Activated CD8-positive, alpha-beta T cell treated with anti-CD3 and anti-CD28 coated beads for 36 hours (primary cell): ENCODE measurements at regions of chr19 and their contacts with region 1.

Region 1: DNA sequence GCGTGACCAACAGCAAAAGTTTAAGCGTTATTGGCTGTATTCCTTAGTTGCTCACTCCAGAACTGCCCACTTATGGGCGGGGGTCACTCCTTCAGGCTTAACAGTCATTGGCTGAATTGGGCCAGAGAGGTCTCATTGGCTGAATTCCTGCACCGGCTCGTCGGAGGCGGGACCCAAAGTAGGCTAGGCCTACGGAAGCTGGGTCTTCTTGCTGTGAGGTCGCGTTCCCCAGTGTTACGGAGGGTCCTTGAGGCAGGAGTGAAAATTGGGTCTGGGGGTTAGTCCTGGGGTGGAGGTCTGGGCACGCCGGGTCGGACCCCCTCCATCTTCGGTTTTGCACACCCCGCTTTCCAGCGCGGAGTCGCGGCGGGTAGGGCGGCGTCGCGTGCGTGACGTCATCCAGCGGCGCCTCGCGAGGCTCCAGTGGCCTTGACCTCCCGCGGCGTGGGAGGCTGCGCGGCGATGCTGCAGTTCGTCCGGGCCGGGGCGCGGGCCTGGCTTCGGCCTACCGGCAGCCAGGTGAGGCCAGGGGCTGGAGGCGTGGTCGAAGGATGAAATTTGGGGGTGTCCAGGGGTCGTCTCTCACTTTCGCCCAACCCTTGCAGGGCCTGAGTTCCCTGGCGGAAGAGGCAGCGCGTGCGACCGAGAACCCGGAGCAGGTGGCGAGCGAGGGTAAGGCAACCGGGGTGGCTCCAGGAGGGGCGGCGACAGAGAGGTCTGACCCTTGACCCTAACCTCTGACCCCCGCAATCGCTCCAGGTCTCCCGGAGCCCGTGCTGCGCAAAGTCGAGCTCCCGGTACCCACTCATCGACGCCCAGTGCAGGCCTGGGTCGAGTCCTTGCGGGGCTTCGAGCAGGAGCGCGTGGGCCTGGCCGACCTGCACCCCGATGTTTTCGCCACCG is at the start of gene MRPL4:
- DNase-seq: peak; percentile 99
- ATAC-seq: peak; percentile 98
- H3K4me3 Mint-ChIP-seq: peak within 1 kb of the TSS; percentile 93
- H3K27ac Mint-ChIP-seq: peak within 1 kb of the TSS; percentile 95
- H3K4me1 Mint-ChIP-seq: peaks cover 23% of the 10 kb centered on the region
- H3K27me3 Mint-ChIP-seq: no peaks in the 10 kb centered on the region
- CTCF ChIP-seq: no peak
- total RNA-seq, gene MRPL4: 151 to 153 TPM

Region 2: DNA sequence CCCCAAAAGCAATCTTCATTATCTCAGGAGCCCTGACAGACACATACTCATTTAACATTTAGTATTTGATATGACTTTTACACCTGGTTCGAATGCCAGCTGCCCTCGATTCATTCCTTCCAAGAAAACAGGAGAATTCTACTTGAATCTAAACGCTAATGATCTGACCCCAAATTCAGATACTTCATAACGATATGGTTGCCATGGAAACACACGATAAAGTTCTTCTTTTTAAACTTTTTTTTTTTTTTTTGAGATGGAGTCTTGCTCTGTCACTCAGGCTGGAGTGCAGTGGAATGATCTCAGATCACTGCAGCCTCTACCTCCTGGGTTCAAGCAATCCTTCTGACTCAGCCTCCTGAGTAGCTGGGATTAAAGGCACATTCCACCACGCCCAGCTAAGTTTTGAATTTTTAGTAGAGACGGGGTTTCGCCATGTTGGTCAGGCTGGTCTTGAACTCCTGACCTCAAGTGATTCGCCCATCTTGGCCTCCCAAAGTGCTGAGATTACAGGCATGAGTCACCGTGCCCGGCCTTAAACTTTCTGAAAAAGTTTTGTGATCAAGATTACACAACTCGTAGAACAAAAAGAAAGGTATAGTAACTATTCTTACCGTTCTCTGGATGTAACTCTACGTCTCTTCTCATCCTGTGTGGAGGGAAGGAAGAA is 78.7 kb before region 1 on chr19:
- CTCF ChIA-PET with region 1: interaction called, 11 read pairs
- POLR2A ChIA-PET with region 1: interaction called, 6 read pairs
- intact Hi-C with region 1: no loop called
- DNase-seq: no peak
- ATAC-seq: no peak
- H3K4me3 Mint-ChIP-seq: no peak overlapping the region
- H3K27ac Mint-ChIP-seq: no peak overlapping the region
- H3K4me1 Mint-ChIP-seq: peaks cover 4% of the 10 kb centered on the region
- H3K27me3 Mint-ChIP-seq: no peaks in the 10 kb centered on the region
- CTCF ChIP-seq: no peak

Region 3: GRCh38 chr19:10201176-10201575 is 50.9 kb before region 1 on chr19:
- CTCF ChIA-PET with region 1: interaction called, 24 read pairs
- POLR2A ChIA-PET with region 1: no interaction called
- intact Hi-C with region 1: loop called (anchors 5 kb)
- DNase-seq: no peak
- ATAC-seq: no peak
- H3K4me3 Mint-ChIP-seq: no peak overlapping the region
- H3K27ac Mint-ChIP-seq: no peak overlapping the region
- H3K4me1 Mint-ChIP-seq: peaks cover 11% of the 10 kb centered on the region
- H3K27me3 Mint-ChIP-seq: no peaks in the 10 kb centered on the region
- CTCF ChIP-seq: no peak

Region 4: GRCh38 chr19:10219678-10220077 is 32.4 kb before region 1 on chr19:
- CTCF ChIA-PET with region 1: interaction called, 21 read pairs
- POLR2A ChIA-PET with region 1: no interaction called
- intact Hi-C with region 1: no loop called
- DNase-seq: peak; percentile 62
- ATAC-seq: peak; percentile 91
- H3K4me3 Mint-ChIP-seq: no peak overlapping the region
- H3K27ac Mint-ChIP-seq: no peak overlapping the region
- H3K4me1 Mint-ChIP-seq: peaks cover 8% of the 10 kb centered on the region
- H3K27me3 Mint-ChIP-seq: no peaks in the 10 kb centered on the region
- CTCF ChIP-seq: peak; percentile 61

Region 5: DNA sequence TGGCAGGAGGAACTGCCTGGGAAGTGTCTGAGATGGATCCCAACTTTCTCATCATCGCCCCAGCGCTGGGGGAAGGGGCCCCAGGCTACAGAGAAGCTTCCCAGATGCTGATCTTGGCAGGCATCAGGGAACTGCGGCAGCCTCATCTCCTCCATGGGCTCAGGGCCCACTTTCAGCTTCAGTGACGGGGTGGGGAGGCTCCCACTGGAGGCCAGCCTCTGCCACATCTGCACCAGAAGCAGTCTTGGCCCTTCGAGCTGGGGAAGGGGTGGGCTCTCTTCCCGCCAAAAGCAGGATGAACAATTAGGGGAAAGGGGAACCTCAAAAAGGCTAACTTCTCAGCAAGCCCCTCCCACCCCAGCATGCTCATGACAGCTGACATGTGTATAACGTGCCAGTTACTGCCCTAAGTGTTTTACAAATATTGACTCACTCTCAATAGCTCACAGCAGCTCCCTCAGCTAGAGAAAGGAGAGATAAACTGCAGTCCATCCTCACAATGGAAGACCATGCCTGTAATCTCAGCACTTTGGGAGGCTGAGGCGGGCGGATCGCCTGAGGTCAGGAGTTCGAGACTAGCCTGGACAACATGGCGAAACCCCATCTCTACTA is 13.8 kb before region 1 on chr19:
- CTCF ChIA-PET with region 1: interaction called, 18 read pairs
- POLR2A ChIA-PET with region 1: interaction called, 7 read pairs
- intact Hi-C with region 1: no loop called
- DNase-seq: peak; percentile 32
- ATAC-seq: no peak
- H3K4me3 Mint-ChIP-seq: no peak overlapping the region
- H3K27ac Mint-ChIP-seq: no peak overlapping the region
- H3K4me1 Mint-ChIP-seq: peaks cover 23% of the 10 kb centered on the region
- H3K27me3 Mint-ChIP-seq: no peaks in the 10 kb centered on the region
- CTCF ChIP-seq: no peak